Activated naive CD4-positive, alpha-beta T cell treated with anti-CD3 and anti-CD28 coated beads for 36 hours (primary cell): ENCODE measurements at regions of chr2 and their contacts with region 1.

Region 1: GRCh38 chr2:69375494-69376353 is 11.3 kb downstream of the GFPT1 start:
- DNase-seq: no peak
- H3K4me3 Mint-ChIP-seq: no peak overlapping the region
- H3K27ac Mint-ChIP-seq: no peak overlapping the region
- H3K4me1 Mint-ChIP-seq: peaks cover 15% of the 10 kb centered on the region
- H3K27me3 Mint-ChIP-seq: no peaks in the 10 kb centered on the region

Region 2: GRCh38 chr2:69356471-69356870 is 19.3 kb before region 1 on chr2:
- CTCF ChIA-PET with region 1: interaction called, 12 read pairs
- intact Hi-C with region 1: no loop called
- DNase-seq: no peak
- H3K4me3 Mint-ChIP-seq: no peak overlapping the region
- H3K27ac Mint-ChIP-seq: no peak overlapping the region
- H3K4me1 Mint-ChIP-seq: no peaks in the 10 kb centered on the region
- H3K27me3 Mint-ChIP-seq: no peaks in the 10 kb centered on the region

Region 3: DNA sequence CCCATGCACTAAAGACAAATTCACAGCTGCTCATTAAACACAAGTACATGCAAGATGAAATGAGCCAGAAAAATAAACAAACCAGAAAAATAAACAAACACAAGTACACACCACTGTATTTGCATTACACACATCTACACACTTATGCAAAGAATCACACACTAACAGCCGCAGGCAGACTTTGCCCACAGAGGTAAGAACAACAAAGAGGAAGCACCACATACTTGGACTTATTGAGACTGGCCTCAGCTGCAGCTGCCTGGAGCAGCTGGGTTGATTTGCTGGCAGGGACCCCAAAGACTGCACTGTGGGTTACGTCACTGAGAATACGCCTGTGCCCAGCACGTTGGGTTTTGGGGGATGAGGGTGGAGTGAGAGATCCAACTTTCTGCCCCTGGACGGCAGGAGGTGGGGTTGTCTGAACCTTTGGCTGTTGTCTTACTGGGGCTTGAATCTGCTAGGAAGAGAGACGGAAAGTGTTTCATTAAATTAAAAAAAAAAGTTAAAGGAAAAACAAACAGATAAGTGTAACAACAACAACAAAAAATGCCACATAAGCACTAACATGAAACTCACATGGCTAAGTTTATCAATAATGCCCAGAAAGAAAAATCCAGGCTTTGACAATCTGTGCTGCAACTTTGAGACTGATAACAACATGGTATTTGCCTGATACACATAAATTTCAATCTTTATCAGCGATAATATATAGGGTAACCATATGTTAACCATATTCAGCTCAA is 133.5 kb after region 1 on chr2:
- CTCF ChIA-PET with region 1: no interaction called
- intact Hi-C with region 1: loop called (anchors 1 kb)
- DNase-seq: no peak
- H3K4me3 Mint-ChIP-seq: no peak overlapping the region
- H3K27ac Mint-ChIP-seq: no peak overlapping the region
- H3K4me1 Mint-ChIP-seq: peaks cover 35% of the 10 kb centered on the region
- H3K27me3 Mint-ChIP-seq: no peaks in the 10 kb centered on the region